OCI-LY7 (cell line): ENCODE measurements at regions of chr9 and their contacts with region 1.

Region 1: DNA sequence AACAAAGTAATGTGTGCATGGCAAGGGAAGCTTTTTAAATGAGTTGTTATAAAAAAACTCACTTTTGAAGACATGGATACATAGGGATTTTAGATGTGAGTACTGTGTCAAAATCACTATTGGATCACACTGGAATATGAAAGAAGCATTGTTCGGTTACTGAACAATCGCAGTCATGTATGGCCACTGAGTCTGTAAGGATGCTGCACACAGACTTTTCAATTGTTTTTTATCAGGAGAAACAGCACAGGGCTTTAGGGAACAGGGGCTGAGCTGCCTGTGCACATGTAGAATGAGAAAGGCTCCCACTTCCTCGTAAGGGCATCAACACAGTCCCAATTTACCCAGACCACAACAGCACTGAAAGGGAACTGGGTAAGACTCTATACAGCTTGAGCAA is 1333.9 kb upstream of the DMAC1 start:
- DNase-seq: no peak
- H3K4me3 ChIP-seq: no peak overlapping the region
- H3K27ac ChIP-seq: no peak overlapping the region
- H3K4me1 ChIP-seq: no peaks in the 10 kb centered on the region
- CTCF ChIP-seq: no peak

Region 2: GRCh38 chr9:9099646-9100045 is 33.9 kb before region 1 on chr9:
- CTCF ChIA-PET with region 1: no interaction called
- POLR2A ChIA-PET with region 1: no interaction called
- intact Hi-C with region 1: no loop called
- DNase-seq: no peak
- H3K4me3 ChIP-seq: no peak overlapping the region
- H3K27ac ChIP-seq: no peak overlapping the region
- H3K4me1 ChIP-seq: no peaks in the 10 kb centered on the region
- CTCF ChIP-seq: no peak

Region 3: DNA sequence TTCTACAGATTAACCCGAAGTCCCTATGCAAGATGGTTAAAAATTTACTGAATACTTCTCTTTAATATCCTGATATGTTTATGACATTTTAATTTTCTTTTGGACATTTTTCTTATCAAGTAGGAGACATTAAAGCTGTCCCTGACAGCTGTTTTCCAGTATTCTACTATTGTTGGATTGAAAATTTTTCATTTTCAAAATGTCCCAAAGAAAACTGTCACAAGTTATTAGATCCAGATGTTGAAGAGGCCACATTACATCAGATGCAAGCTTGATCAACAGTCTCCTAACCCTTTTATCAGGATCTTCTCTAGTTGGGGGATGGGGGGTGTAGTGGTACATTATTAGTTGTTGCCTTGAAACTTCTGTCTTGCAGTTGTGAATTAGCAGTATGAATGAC is 68.8 kb after region 1 on chr9:
- CTCF ChIA-PET with region 1: no interaction called
- POLR2A ChIA-PET with region 1: no interaction called
- intact Hi-C with region 1: loop called (anchors 10 kb)
- DNase-seq: no peak
- H3K4me3 ChIP-seq: no peak overlapping the region
- H3K27ac ChIP-seq: no peak overlapping the region
- H3K4me1 ChIP-seq: no peaks in the 10 kb centered on the region
- CTCF ChIP-seq: no peak

Region 4: GRCh38 chr9:9257999-9258498 is 124.5 kb after region 1 on chr9:
- CTCF ChIA-PET with region 1: no interaction called
- POLR2A ChIA-PET with region 1: no interaction called
- intact Hi-C with region 1: no loop called
- DNase-seq: no peak
- H3K4me3 ChIP-seq: no peak overlapping the region
- H3K27ac ChIP-seq: no peak overlapping the region
- H3K4me1 ChIP-seq: no peaks in the 10 kb centered on the region
- CTCF ChIP-seq: no peak